A549 (cell line): ENCODE measurements at regions of chr7 and their contacts with region 1.

Region 1: GRCh38 chr7:83149466-83149865 is 13.2 kb downstream of the PCLO start:
- DNase-seq: no peak
- ATAC-seq: no peak
- H3K4me3 ChIP-seq: no peak overlapping the region
- H3K27ac ChIP-seq: 0 out of 6 replicates have a peak overlapping the region, but pooled peaks of 1 of the 2 experiments have one; percentile 48
- H3K4me1 ChIP-seq: peaks cover 27% of the 10 kb centered on the region
- CTCF ChIP-seq: no peak
- EP300 ChIP-seq: no peak
- POLR2A ChIP-seq: no peak
- RAD21 ChIP-seq: no peak

Region 2: GRCh38 chr7:84389242-84389641 is 1239.8 kb after region 1 on chr7:
- CTCF ChIA-PET with region 1: no interaction called
- POLR2A ChIA-PET with region 1: interaction called, 15 read pairs
- DNase-seq: no peak
- ATAC-seq: no peak
- H3K4me3 ChIP-seq: no peak overlapping the region
- H3K27ac ChIP-seq: no peak overlapping the region
- H3K4me1 ChIP-seq: peaks cover 8% of the 10 kb centered on the region; the same call in 2 of the 3 replicates
- CTCF ChIP-seq: no peak
- EP300 ChIP-seq: no peak
- POLR2A ChIP-seq: no peak
- RAD21 ChIP-seq: no peak